A673 (cell line): ENCODE measurements at regions of chr3 and their contacts with region 1.

Region 1: DNA sequence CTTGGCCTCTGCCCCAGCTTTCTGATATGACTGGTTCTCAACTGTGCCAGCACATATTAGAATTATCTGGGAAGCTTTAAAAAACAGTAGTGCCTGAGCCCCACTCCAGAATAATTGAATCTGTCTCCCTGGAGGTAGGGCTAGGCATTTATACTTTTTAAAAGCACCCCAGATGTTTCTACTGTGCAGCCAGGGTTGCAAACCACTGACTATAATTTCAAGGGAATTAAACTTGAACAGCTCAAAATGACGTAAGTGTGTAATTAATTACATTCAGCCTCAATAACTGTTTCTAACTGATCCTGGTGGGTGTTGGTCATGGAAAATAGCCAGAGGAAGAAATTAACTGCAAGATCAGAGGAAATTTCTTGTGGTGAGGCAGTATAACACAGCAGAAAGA is 4.4 kb upstream of the IRAK2 start:
- DNase-seq: peak; percentile 76
- H3K4me3 ChIP-seq: no peak overlapping the region
- H3K27ac ChIP-seq: peak overlapping the region; percentile 40
- H3K4me1 ChIP-seq: peaks cover 12% of the 10 kb centered on the region
- H3K27me3 ChIP-seq: no peaks in the 10 kb centered on the region
- CTCF ChIP-seq: no peak

Region 2: DNA sequence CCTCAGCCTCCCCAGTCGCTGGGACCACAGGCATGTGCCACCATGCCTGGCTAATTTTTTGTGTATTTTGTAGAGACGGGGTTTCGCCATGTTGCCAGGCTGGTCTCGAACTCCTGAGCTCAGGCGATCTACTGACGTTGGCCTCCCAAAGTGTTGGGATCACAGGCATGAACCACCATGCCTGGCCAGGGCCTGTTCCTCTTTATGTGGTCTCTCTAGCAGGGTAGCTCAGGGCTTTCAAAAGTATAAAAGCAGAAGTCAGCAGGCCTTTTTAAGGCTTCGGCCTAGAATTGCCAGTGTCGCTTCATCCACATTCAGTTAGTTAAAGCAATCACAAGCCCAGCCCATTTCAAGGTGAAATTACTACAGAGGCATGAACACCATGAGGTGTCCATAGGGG is 11.1 kb before region 1 on chr3:
- CTCF ChIA-PET with region 1: no interaction called
- POLR2A ChIA-PET with region 1: interaction called, 11 read pairs
- intact Hi-C with region 1: no loop called
- DNase-seq: no peak
- H3K4me3 ChIP-seq: no peak overlapping the region
- H3K27ac ChIP-seq: no peak overlapping the region
- H3K4me1 ChIP-seq: no peaks in the 10 kb centered on the region
- H3K27me3 ChIP-seq: no peaks in the 10 kb centered on the region
- CTCF ChIP-seq: no peak

Region 3: DNA sequence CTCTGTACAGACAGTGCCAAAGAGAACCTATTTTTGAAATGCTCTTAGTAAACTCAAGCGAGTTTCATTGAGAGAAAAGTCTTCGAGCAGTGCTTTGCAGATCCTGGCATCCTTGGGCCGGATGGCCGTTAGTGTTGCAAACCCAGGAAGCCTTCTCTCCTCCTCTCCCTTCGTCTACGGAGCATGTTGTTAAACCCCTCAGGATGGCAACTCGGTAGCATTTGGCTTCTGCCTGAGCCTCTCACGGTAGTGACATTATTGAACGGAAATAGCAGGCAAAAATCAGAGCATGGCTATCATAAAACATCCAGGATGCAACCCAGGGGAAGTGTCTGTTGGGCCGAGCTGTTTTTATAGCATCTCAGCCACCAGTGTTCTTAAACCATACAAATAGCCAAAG is 167.2 kb after region 1 on chr3:
- CTCF ChIA-PET with region 1: no interaction called
- POLR2A ChIA-PET with region 1: no interaction called
- intact Hi-C with region 1: no loop called
- DNase-seq: no peak
- H3K4me3 ChIP-seq: no peak overlapping the region
- H3K27ac ChIP-seq: no peak overlapping the region
- H3K4me1 ChIP-seq: no peaks in the 10 kb centered on the region
- H3K27me3 ChIP-seq: peaks cover 75% of the 10 kb centered on the region
- CTCF ChIP-seq: no peak

Region 4: DNA sequence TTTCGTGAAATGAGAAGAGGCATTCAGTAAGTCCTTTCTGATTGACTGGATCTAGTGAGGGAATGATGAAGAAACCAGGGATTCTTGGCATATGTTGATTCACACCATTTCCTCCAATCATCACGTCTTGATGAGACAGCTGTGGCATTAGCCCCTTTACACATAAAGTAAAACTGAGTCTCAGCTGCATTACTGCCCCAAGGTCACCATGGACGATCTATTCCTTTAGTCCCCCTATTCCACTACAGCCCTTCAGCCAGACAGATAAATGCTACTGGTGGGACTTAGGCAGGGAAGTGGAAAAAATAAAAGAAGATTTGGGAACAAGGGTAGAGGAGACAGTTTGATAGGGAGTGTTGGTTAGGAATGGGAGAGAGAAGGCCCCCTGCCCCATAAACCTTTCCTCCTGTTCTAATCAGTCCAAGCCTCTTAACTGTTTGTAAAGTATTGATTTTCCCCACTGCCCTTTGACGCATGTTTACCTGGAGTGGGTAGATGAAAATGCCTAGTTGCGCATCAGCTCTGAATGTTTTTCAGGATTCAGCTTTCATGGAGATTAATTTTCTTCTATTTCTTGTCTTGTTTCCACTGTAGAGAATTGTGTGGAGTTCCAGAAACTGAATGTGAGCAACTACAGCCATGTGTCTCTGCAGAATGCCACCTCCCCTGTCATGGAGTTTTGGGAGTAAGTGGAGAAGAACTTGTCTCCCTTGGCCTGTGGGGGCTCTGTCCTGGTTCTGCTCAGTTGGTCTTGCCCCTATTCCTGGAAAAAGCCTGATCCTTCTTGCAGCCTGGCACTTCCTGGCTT is 662.6 kb after region 1 on chr3:
- CTCF ChIA-PET with region 1: no interaction called
- POLR2A ChIA-PET with region 1: no interaction called
- intact Hi-C with region 1: no loop called
- DNase-seq: no peak
- H3K4me3 ChIP-seq: no peak overlapping the region
- H3K27ac ChIP-seq: no peak overlapping the region
- H3K4me1 ChIP-seq: no peaks in the 10 kb centered on the region
- H3K27me3 ChIP-seq: peaks cover 28% of the 10 kb centered on the region
- CTCF ChIP-seq: no peak